ENCODE measurements at regions of chr15 and their contacts with region 1.

Region 1: DNA sequence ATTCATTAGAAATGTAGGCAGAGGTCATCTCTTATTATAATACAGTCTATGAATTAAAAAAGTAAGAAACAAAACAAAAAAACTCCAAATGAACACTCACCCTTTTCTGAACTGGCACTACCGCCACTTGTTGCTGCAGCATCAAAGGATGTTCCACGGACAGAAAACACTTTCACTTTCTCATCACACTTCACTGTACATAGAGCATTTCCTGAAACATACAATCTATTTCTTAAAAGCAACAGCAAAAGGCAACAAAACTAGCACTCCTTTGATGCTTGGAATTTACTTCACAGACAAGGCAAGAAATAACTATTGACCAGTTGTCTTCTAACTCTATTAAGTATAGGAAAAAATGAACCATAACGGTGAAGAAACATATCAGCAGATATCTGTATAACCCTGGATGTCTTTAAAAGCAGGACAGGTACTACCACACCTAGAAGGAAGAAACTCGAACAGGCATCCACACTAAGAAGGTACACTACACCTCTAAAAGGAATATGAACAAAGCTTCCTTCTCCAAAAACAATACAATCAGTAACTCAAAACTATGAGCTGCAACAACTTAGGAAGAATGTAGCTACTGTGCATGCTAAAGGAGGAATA is 24.9 kb downstream of the ETFA start:
- DNase-seq: peak; percentile 38
- ATAC-seq: peak; percentile 97
- H3K4me3 Mint-ChIP-seq: peak overlapping the region; percentile 53
- H3K27ac Mint-ChIP-seq: peak overlapping the region; percentile 72
- H3K4me1 Mint-ChIP-seq: peaks cover 20% of the 10 kb centered on the region
- H3K27me3 Mint-ChIP-seq: no peaks in the 10 kb centered on the region

Region 2: DNA sequence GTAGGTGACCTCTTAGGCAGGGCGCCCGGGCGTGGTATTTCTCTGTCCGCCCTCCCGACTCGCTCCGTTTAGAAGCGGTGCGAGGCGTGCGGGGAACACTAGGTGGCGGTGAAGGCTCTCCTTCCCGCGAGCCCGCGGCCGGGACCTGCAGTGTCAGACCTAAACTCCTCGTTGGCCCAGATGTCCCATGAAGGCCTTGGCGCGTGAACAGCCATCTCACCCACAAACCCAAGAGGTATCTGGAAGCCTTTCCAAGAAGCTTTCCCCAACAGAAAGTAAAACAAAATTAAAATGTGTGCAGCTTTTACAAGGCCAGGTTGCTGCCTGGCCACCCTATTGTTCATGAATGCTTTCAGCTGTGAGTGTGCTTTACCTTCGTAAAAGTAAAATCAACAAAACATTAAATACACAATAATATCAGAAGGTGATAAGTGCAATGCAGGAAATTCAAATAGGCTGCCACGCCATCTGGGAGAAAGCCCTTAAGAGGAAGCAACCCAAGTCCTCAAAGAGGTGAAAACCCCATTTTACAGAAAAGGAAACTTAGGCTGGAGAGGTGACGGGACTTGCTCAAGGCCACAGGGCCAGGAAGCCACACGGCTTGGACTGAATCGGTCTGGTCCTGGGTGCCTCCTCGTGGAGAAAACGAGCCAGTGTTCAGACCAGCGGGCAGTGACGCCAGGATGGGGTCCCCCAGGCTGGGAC is 95.4 kb before region 1 on chr15:
- CTCF ChIA-PET with region 1: interaction called, 3 read pairs
- POLR2A ChIA-PET with region 1: no interaction called
- intact Hi-C with region 1: loop called in 1 of 2 experiments (anchors 2 kb)
- DNase-seq: peak; percentile 88
- ATAC-seq: peak; percentile 98
- H3K4me3 Mint-ChIP-seq: no peak overlapping the region
- H3K27ac Mint-ChIP-seq: no peak overlapping the region
- H3K4me1 Mint-ChIP-seq: peaks cover 9% of the 10 kb centered on the region
- H3K27me3 Mint-ChIP-seq: peaks cover 41% of the 10 kb centered on the region

Region 3: DNA sequence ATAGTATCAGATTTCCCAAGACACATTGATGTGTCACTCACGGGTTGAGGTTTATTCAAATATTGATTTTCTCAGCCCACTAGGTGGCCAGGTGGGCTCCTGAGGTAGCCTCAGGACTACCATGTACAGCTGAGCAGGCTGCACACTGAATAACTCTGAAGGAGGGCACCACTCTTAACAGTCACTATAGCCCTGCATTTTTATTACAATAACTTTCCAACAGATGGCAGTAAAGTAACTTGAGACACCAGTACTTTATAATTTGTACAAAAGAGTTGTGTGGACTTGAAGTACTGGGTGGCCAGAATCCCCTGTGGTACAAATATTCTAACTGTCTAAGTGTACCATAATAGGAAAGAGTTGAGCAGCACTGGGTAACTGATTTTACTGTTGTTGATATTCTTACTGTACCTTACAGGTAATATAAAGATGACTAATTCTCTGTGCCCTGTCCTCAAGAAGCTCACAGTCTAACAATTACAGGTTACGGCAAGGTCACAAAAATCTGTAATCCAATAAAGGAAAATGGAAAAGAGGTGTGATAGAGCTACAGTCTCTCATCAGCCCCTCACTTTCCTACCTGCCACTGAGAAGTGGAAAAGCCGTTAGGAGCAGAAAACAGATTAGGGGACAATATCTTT is 51.1 kb before region 1 on chr15:
- CTCF ChIA-PET with region 1: interaction called, 5 read pairs
- POLR2A ChIA-PET with region 1: no interaction called
- intact Hi-C with region 1: loop called in 1 of 2 experiments (anchors 5 kb)
- DNase-seq: no peak
- ATAC-seq: peak; percentile 77
- H3K4me3 Mint-ChIP-seq: no peak overlapping the region
- H3K27ac Mint-ChIP-seq: no peak overlapping the region
- H3K4me1 Mint-ChIP-seq: no peaks in the 10 kb centered on the region
- H3K27me3 Mint-ChIP-seq: no peaks in the 10 kb centered on the region

Region 4: GRCh38 chr15:76311100-76311953 is 25.0 kb after region 1 on chr15 and contains the start of gene ETFA:
- CTCF ChIA-PET with region 1: no interaction called
- POLR2A ChIA-PET with region 1: no interaction called
- intact Hi-C with region 1: loop called in 1 of 2 experiments (anchors 1 kb)
- DNase-seq: peak; percentile 95
- ATAC-seq: peak; percentile 98
- H3K4me3 Mint-ChIP-seq: peak within 1 kb of the TSS; percentile 87
- H3K27ac Mint-ChIP-seq: peak within 1 kb of the TSS; percentile 69
- H3K4me1 Mint-ChIP-seq: peaks cover 28% of the 10 kb centered on the region
- H3K27me3 Mint-ChIP-seq: no peaks in the 10 kb centered on the region
- total RNA-seq, gene ETFA: 100 to 136 TPM

Region 5: GRCh38 chr15:76418369-76419140 is 132.2 kb after region 1 on chr15:
- CTCF ChIA-PET with region 1: no interaction called
- POLR2A ChIA-PET with region 1: no interaction called
- intact Hi-C with region 1: no loop called
- DNase-seq: no peak
- ATAC-seq: no peak
- H3K4me3 Mint-ChIP-seq: no peak overlapping the region
- H3K27ac Mint-ChIP-seq: no peak overlapping the region
- H3K4me1 Mint-ChIP-seq: no peaks in the 10 kb centered on the region
- H3K27me3 Mint-ChIP-seq: no peaks in the 10 kb centered on the region

Region 6: GRCh38 chr15:76448755-76449154 is 162.4 kb after region 1 on chr15:
- CTCF ChIA-PET with region 1: no interaction called
- POLR2A ChIA-PET with region 1: no interaction called
- intact Hi-C with region 1: no loop called
- DNase-seq: no peak
- ATAC-seq: no peak
- H3K4me3 Mint-ChIP-seq: no peak overlapping the region
- H3K27ac Mint-ChIP-seq: no peak overlapping the region
- H3K4me1 Mint-ChIP-seq: no peaks in the 10 kb centered on the region
- H3K27me3 Mint-ChIP-seq: no peaks in the 10 kb centered on the region

Region 7: GRCh38 chr15:76931397-76932007 is 645.1 kb after region 1 on chr15 and contains the start of gene RCN2:
- CTCF ChIA-PET with region 1: no interaction called
- POLR2A ChIA-PET with region 1: no interaction called
- intact Hi-C with region 1: no loop called
- DNase-seq: peak; percentile 96
- ATAC-seq: peak; percentile 99
- H3K4me3 Mint-ChIP-seq: peak within 1 kb of the TSS; percentile 81
- H3K27ac Mint-ChIP-seq: peak within 1 kb of the TSS; percentile 85
- H3K4me1 Mint-ChIP-seq: peaks cover 31% of the 10 kb centered on the region
- H3K27me3 Mint-ChIP-seq: no peaks in the 10 kb centered on the region
- total RNA-seq, gene RCN2: 16.6 to 18.9 TPM